Heart left ventricle (tissue), 16 donors: ENCODE measurements at regions of chr2 and their contacts with region 1.

Region 1: DNA sequence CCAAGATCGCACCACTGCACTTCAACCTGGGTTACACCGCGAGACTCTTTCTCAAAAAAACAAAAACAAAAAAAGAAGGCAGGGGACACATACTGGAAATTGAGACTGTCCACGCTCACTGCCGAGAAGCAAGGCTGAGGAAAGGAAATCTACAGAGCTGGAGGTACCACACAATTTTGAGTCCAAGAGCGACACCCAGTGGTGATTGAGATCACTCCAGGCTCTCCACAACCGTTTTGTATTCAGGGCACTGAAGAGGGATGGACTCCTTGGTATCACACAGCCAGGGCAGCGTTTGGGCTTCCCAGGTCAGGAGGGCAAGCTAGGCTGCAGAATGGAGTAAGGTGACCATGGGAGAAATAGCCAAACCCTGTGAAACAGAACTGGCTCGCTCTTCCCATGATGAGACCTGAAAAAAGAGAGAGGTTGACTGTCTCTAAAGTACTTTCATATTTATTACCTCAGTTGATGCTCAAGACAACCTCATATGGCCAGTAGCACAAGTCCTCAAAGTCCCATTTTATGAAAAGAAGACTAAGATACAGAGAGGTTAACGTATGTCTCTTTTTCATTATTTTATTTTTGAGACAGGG is 74.5 kb upstream of the YPEL5 start:
- DNase-seq: peak in 4 of 5 donors; percentile 46 to 54 (median 50)
- ATAC-seq: peak in 3 of 4 donors; percentile 85 to 93 (median 88)
- H3K4me3 ChIP-seq: no peak overlapping the region
- H3K27ac ChIP-seq: no peak overlapping the region
- H3K4me1 ChIP-seq: peaks cover 0 to 4% (median 0%) of the 10 kb centered on the region in 12 donors
- H3K27me3 ChIP-seq: peaks cover 0 to 21% (median 5%) of the 10 kb centered on the region in 9 donors
- CTCF ChIP-seq: peak; percentile 39 to 74 (median 61)
- POLR2A ChIP-seq: no peak

Region 2: DNA sequence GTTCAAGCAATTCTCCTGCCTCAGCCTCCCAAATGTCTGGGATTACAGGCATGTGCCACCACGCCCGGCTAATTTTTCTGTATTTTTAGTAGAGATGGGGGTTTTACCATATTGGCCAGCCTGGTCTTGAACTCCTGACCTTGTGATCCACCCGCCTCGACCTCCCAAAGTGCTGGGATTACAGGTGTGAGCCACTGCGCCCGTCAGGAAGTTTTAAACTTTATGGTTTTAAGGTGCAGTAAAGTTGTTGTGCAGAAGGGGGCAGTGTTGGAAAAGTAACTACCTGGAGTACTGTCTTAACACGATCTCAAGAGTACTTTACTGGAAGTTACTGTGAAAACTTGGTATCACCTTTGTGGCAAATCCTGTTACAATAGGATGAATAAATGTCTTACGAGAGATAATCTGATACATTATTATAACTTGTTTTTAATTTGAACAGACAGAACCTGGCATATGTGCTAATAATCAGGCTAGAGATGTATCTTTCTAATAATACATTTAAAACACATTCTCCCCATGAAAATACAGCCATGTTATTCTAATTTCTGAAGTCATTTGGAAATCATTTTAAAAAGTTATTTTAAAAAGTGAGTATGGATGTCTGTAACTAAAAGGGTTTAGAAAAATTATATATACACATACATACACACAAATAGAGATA is 1250.9 kb before region 1 on chr2:
- intact Hi-C with region 1: loop called in 1 of 10 experiments (anchors 10 kb)
- DNase-seq: peak in 2 of 5 donors; percentile 18 to 25
- ATAC-seq: peak in 3 of 4 donors; percentile 60 to 69 (median 67)
- H3K4me3 ChIP-seq: no peak overlapping the region
- H3K27ac ChIP-seq: no peak overlapping the region
- H3K4me1 ChIP-seq: peaks cover 0 to 3% (median 0%) of the 10 kb centered on the region in 12 donors
- H3K27me3 ChIP-seq: no peaks in the 10 kb centered on the region
- CTCF ChIP-seq: peak; percentile 51 to 76 (median 66)
- POLR2A ChIP-seq: no peak

Region 3: DNA sequence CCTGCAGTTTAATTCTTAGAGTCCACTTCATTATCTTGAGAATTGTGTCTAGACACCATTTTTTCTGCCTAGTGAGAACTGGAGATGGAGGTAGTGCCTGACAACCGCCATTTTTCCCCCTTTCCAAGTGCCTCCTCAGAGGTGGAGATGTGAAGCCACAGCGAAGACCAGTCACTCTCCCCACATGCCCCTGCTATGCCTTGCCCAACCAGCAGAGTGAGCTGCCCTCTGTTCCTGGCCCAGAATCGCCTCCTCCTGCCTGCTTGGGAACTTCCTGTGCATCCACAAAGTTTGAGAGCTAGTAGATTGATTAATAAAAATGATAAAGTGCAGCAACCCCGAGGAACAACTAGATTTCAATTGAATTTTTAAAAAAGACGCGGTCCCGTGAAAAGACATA is 833.8 kb before region 1 on chr2:
- intact Hi-C with region 1: loop called in 1 of 10 experiments (anchors 2 kb)
- DNase-seq: no peak
- ATAC-seq: peak in 1 of 4 donors; percentile 62
- H3K4me3 ChIP-seq: no peak overlapping the region
- H3K27ac ChIP-seq: no peak overlapping the region
- H3K4me1 ChIP-seq: no peaks in the 10 kb centered on the region
- H3K27me3 ChIP-seq: peaks cover 0 to 49% (median 5%) of the 10 kb centered on the region in 9 donors
- CTCF ChIP-seq: peak; percentile 18 to 59 (median 34)
- POLR2A ChIP-seq: no peak

Region 4: GRCh38 chr2:29923110-29923721 is 149.1 kb before region 1 on chr2:
- intact Hi-C with region 1: loop called in 7 of 10 experiments (anchors 2 to 10 kb)
- DNase-seq: peak in 4 of 5 donors; percentile 32 to 62 (median 46)
- ATAC-seq: no peak
- H3K4me3 ChIP-seq: no peak overlapping the region
- H3K27ac ChIP-seq: no peak overlapping the region
- H3K4me1 ChIP-seq: peaks cover 5 to 30% (median 22%) of the 10 kb centered on the region in 12 donors
- H3K27me3 ChIP-seq: peaks cover 0 to 67% (median 24%) of the 10 kb centered on the region in 9 donors
- CTCF ChIP-seq: peak; percentile 85 to 96 (median 92)
- POLR2A ChIP-seq: no peak

Region 5: DNA sequence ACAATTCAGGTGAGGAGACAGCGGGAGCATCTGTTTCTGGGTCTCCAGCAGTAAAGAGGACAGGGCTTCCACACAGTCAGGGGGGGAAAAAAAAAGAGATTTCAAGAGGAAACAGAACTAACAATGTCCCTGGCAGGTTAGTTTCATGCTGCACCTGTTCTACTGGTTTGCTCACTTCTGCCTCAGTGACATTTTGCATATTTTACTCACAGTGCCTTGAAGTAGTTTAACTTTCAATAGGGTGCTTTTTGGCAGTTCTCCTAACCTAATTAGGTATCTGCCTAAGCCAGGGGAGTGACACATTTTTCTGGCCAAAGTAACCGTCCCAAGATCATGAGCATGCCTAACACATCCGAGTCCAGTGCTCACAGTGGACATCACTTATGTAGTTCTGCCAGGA is 42.0 kb before region 1 on chr2:
- intact Hi-C with region 1: no loop called
- DNase-seq: no peak
- ATAC-seq: no peak
- H3K4me3 ChIP-seq: no peak overlapping the region
- H3K27ac ChIP-seq: no peak overlapping the region
- H3K4me1 ChIP-seq: no peaks in the 10 kb centered on the region
- H3K27me3 ChIP-seq: peaks cover 0 to 25% (median 7%) of the 10 kb centered on the region in 9 donors
- CTCF ChIP-seq: no peak
- POLR2A ChIP-seq: no peak